Activated T-helper 1 cell treated with anti-CD3 and anti-CD28 coated beads, Interleukin-12 subunit alpha, Interleukin-12 subunit beta, Interleukin-2, Interleukin-4 antibody, amounts not matched to agents 30 ng/mL and 10 ng/mL and 1 ng/mL, durations not matched to agents 14 hours and 24 hours and 36 hours (primary cell): ENCODE measurements at regions of chr15 and their contacts with region 1.

Region 1: DNA sequence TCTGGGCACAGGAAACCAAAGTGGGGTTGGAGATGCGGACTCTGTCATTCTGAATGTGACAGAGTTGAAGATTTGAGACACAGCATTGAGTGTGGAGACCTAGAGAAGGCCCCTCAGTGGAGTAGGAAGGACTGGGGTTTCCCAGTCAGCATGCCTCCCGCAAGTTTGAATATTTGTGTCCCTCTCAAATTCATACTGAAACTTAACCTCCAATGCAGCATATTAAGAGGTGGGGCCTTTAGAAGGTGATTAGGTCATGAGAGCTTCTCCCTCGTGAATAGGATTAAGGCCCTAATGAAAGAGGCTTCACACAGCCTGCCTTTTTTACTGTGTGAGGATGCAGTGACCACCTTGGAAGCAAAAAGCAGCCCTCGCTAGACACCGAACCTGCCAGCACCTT is 8.0 kb downstream of the HDDC3 start:
- DNase-seq: no peak
- H3K4me3 Mint-ChIP-seq: peak overlapping the region; percentile 51
- H3K27ac Mint-ChIP-seq: peak overlapping the region; percentile 85
- H3K4me1 Mint-ChIP-seq: peaks cover 54% of the 10 kb centered on the region
- H3K27me3 Mint-ChIP-seq: no peaks in the 10 kb centered on the region

Region 2: DNA sequence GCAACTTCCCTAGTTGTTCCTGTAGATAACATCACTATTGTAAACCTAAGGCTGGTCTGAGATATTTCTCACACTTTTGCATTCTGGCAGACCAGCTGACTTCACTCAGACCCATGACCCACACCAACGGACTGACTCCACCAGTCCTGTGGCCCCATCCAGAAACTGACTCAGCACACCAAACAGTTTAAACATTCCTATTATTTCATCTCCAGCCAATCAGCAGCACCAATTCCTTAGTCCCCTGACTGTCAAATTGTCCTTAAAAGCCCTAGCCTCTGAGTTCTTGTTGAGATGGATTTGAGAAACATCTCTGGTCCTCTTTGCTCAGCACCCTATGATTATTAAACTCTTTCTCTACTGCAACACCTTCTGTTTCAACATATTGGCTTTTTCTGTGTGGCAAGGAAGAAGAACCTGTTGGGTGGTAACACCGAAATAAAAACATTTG is 809.9 kb before region 1 on chr15:
- intact Hi-C with region 1: no loop called
- DNase-seq: no peak
- H3K4me3 Mint-ChIP-seq: no peak overlapping the region
- H3K27ac Mint-ChIP-seq: no peak overlapping the region
- H3K4me1 Mint-ChIP-seq: no peaks in the 10 kb centered on the region
- H3K27me3 Mint-ChIP-seq: peaks cover 6% of the 10 kb centered on the region

Region 3: GRCh38 chr15:90845201-90845949 is 79.0 kb before region 1 on chr15:
- intact Hi-C with region 1: loop called (anchors 2 kb)
- DNase-seq: peak; percentile 68
- H3K4me3 Mint-ChIP-seq: peak overlapping the region; percentile 53
- H3K27ac Mint-ChIP-seq: peak overlapping the region; percentile 97
- H3K4me1 Mint-ChIP-seq: peaks cover 62% of the 10 kb centered on the region
- H3K27me3 Mint-ChIP-seq: no peaks in the 10 kb centered on the region

Region 4: DNA sequence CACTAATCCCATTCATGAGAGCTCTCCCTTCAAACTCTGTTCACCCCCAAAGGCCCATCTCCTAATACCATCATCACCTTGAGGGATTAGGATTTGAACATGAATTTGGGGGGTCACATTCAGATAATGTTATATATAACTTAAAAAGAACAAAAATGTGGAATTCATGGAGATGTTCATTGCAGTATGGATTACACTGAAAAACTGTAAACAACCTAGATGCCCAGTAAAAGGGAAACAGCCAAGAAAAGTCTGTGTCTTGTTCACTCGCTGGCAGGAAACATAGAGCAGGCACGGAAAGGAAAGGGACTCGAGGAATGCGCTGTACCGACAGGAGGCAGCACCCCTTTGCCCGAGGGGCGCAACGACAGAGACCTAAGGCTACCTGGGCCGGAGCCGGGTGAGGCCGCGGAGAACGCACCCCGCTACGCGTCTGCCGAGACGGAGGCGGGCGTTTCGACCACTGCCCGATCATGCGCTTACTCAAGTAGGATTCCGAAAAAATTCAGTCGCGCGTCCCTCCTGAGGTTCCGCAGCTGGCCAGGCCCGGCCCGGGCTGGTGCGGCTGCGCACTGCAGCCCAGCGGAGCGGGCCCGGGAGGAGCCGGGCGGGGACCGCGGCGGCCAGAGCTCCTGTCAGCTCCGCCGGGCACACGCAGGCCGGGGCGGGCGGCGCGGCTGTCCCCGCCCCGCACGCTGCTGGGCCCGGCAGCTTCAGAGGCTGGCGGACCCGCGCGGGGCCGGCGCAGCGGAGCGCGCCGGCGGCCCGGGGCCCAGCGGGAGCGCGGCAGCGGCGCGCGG is 22.1 kb before region 1 on chr15:
- intact Hi-C with region 1: loop called (anchors 2 kb)
- DNase-seq: peak; percentile 69
- H3K4me3 Mint-ChIP-seq: peak overlapping the region; percentile 79
- H3K27ac Mint-ChIP-seq: peak overlapping the region; percentile 82
- H3K4me1 Mint-ChIP-seq: peaks cover 44% of the 10 kb centered on the region
- H3K27me3 Mint-ChIP-seq: no peaks in the 10 kb centered on the region